CD14-positive monocyte (primary cell): ENCODE measurements at regions of chr3 and their contacts with region 1.

Region 1: DNA sequence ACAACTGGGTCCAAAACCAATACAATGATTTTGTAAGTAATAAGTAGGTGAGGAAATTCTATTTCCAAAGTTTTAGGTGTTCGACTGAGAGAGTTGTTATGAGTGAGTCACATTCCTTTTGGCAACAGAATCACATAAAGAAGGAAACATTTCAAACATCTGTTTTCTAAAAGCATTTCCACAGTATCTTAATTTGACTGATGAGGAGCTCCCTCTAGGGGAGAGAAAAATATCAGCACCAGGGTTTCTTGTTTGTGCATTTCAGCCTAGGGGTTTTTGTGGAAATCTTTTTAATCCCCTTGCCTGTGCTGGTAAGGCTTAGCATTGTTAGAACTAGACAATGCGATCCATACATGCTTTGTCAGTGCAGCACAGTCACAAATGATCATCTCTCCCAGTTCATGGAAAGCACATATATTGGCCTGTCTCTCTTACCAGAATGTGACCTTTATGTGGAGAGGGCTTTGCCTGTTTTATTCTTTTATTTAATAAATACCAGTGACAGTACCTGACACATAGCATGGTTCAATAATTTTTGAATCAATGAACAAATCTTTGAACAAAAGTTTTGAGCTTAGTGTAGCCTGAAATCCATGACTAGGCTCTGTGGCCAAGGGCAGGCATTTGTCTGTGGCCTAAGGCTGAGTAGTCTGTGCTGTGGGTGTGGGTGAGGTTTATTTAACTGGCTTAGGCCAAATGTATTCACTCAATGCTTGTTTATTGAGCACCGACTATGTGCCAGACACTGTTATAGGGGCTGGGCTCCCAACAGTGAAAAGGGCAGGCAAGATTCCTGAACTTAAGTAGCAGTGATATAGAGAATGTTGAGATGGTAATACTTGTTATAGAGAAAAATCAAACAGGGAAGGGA is 21.1 kb upstream of the IQCF6 start:
- DNase-seq: peak; percentile 17 to 43 (median 39)
- H3K4me3 ChIP-seq: no peak overlapping the region
- H3K4me3 Mint-ChIP-seq: no peak overlapping the region
- H3K27ac ChIP-seq: no peak overlapping the region
- H3K27ac Mint-ChIP-seq: no peak overlapping the region
- H3K4me1 ChIP-seq: peaks cover 4 to 5% of the 10 kb centered on the region in 2 donors
- H3K4me1 Mint-ChIP-seq: peaks cover 4% of the 10 kb centered on the region
- H3K27me3 ChIP-seq: no peaks in the 10 kb centered on the region
- H3K27me3 Mint-ChIP-seq: peaks cover 11 to 23% (median 12%) of the 10 kb centered on the region in 3 donors
- CTCF ChIP-seq: peak; percentile 83

Region 2: DNA sequence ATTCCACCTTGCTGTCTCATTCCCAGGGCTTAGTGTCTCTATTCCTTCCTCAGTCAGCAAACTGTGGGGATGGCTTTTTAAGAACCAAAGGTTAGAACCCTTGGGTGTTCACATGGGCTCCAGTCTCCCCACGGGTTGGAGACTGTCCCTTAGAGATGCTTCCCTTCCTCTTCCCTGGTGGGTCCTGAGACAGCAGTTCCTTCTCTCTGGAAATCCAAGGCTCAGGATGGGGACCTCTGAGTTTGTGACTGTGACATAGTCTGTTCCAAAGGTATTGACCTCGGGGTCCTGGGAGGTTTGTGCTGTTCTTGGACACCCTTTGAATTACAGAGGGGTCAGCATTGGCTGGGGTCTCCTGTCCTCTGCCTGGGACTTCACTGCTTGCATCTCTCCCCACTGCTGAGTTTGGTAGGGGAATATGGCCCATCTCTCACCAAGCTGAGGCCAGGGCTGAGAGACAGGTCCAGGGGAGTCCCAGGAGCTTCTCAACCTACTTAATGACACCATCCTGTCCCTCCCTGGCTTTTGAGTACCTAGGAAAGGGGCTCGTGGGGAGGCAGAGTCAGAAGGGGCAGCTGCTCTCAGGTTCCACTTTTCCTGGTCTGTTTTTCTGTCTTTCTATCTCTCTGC is 91.8 kb before region 1 on chr3:
- intact Hi-C with region 1: no loop called
- DNase-seq: no peak
- H3K4me3 ChIP-seq: no peak overlapping the region
- H3K4me3 Mint-ChIP-seq: no peak overlapping the region
- H3K27ac ChIP-seq: no peak overlapping the region
- H3K27ac Mint-ChIP-seq: no peak overlapping the region
- H3K4me1 ChIP-seq: no peaks in the 10 kb centered on the region
- H3K4me1 Mint-ChIP-seq: no peaks in the 10 kb centered on the region
- H3K27me3 ChIP-seq: peaks cover 0 to 8% of the 10 kb centered on the region in 2 donors
- H3K27me3 Mint-ChIP-seq: peaks cover 8 to 18% (median 12%) of the 10 kb centered on the region in 3 donors
- CTCF ChIP-seq: no peak

Region 3: GRCh38 chr3:51718547-51719409 is 81.3 kb before region 1 on chr3:
- intact Hi-C with region 1: loop called (anchors 5 kb)
- DNase-seq: peak; percentile 65 to 77 (median 65)
- H3K4me3 ChIP-seq: no peak overlapping the region
- H3K4me3 Mint-ChIP-seq: no peak overlapping the region
- H3K27ac ChIP-seq: no peak overlapping the region
- H3K27ac Mint-ChIP-seq: no peak overlapping the region
- H3K4me1 ChIP-seq: peaks cover 0 to 7% of the 10 kb centered on the region in 2 donors
- H3K4me1 Mint-ChIP-seq: peaks cover 11% of the 10 kb centered on the region
- H3K27me3 ChIP-seq: no peaks in the 10 kb centered on the region
- H3K27me3 Mint-ChIP-seq: peaks cover 0 to 6% (median 2%) of the 10 kb centered on the region in 3 donors
- CTCF ChIP-seq: peak; percentile 85